ENCODE measurements at regions of chr17 and their contacts with region 1.

Region 1: GRCh38 chr17:76121932-76122430 is 18.4 kb upstream of the EXOC7 start:
- H3K4me3 ChIP-seq: no peak overlapping the region
- H3K27ac ChIP-seq: no peak overlapping the region
- H3K4me1 ChIP-seq: no peaks in the 10 kb centered on the region
- CTCF ChIP-seq: no peak

Region 2: GRCh38 chr17:76022285-76022684 is 99.7 kb before region 1 on chr17:
- CTCF ChIA-PET with region 1: no interaction called
- POLR2A ChIA-PET with region 1: no interaction called
- H3K4me3 ChIP-seq: no peak overlapping the region
- H3K27ac ChIP-seq: no peak overlapping the region
- H3K4me1 ChIP-seq: no peaks in the 10 kb centered on the region
- CTCF ChIP-seq: no peak

Region 3: DNA sequence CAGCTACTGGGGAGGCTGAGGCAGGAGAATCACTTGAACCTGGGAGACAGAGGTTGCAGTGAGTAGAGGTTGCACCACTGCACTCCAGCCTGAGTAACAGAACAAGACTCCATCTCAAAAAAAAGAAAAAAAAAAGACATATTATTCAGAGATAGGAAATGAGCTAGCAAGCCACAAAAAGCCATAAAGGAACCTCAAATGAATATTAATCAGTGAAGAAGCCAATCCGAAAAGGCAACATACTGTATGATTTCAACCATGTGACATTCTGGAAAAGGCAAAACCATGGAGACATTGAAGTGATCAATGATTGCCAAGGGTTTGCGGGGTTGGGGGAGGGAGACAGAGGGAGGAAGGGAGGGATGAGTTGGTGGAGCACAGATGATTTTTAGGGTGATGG is 10.0 kb before region 1 on chr17:
- CTCF ChIA-PET with region 1: interaction called, 12 read pairs
- POLR2A ChIA-PET with region 1: interaction called, 4 read pairs
- H3K4me3 ChIP-seq: no peak overlapping the region
- H3K27ac ChIP-seq: no peak overlapping the region
- H3K4me1 ChIP-seq: no peaks in the 10 kb centered on the region
- CTCF ChIP-seq: no peak

Region 4: GRCh38 chr17:76141212-76142038 is 19.4 kb after region 1 on chr17 and contains the start of gene FOXJ1:
- CTCF ChIA-PET with region 1: interaction called, 38 read pairs
- POLR2A ChIA-PET with region 1: no interaction called
- H3K4me3 ChIP-seq: peak within 1 kb of the TSS; percentile 27
- H3K27ac ChIP-seq: peak within 1 kb of the TSS; percentile 48; the same call in 1 of the 2 replicates
- H3K4me1 ChIP-seq: peaks cover 9% of the 10 kb centered on the region
- CTCF ChIP-seq: no peak

Region 5: GRCh38 chr17:76153640-76154039 is 31.7 kb after region 1 on chr17:
- CTCF ChIA-PET with region 1: interaction called, 17 read pairs
- POLR2A ChIA-PET with region 1: no interaction called
- H3K4me3 ChIP-seq: no peak overlapping the region
- H3K27ac ChIP-seq: no peak overlapping the region
- H3K4me1 ChIP-seq: no peaks in the 10 kb centered on the region
- CTCF ChIP-seq: peak; percentile 16; the same call in 1 of the 2 replicates

Region 6: GRCh38 chr17:76272541-76273444 is 150.8 kb after region 1 on chr17:
- CTCF ChIA-PET with region 1: interaction called, 191 read pairs
- POLR2A ChIA-PET with region 1: interaction called, 3 read pairs
- H3K4me3 ChIP-seq: no peak overlapping the region
- H3K27ac ChIP-seq: no peak overlapping the region
- H3K4me1 ChIP-seq: no peaks in the 10 kb centered on the region
- CTCF ChIP-seq: no peak

Region 7: GRCh38 chr17:76314392-76315227 is 192.6 kb after region 1 on chr17:
- CTCF ChIA-PET with region 1: no interaction called
- POLR2A ChIA-PET with region 1: no interaction called
- H3K4me3 ChIP-seq: no peak overlapping the region
- H3K27ac ChIP-seq: no peak overlapping the region
- H3K4me1 ChIP-seq: no peaks in the 10 kb centered on the region
- CTCF ChIP-seq: no peak